Dendritic cell treated with granulocyte-macrophage colony-stimulating factor and Interleukin-4, amounts not matched to agents 40 ng/mL and 50 ng/mL, for 4 days (primary cell): ENCODE measurements at regions of chr2 and their contacts with region 1.

Region 1: DNA sequence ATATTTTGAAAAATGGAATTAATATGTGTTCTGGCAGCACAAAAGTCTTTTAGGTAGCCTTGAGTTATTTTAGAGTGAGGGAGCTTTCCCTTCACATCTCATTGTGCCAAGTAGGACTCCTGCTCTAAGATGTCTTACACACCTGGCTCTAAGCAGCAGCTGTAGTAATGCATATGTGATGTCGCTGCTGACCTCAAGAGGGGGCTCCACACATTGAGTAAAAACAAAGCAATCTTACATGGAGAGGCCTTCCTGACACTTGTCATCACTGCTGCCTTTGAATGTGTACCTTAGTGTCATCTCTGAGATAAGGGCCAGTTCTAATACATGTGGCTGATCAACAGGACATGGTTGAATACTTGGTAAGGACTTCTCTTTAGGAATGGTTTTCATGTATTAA is 75.8 kb downstream of the ACTR3 start:
- H3K4me3 Mint-ChIP-seq: no peak overlapping the region
- H3K27ac Mint-ChIP-seq: no peak overlapping the region
- H3K4me1 Mint-ChIP-seq: peaks cover 46% of the 10 kb centered on the region
- H3K27me3 Mint-ChIP-seq: no peaks in the 10 kb centered on the region

Region 2: DNA sequence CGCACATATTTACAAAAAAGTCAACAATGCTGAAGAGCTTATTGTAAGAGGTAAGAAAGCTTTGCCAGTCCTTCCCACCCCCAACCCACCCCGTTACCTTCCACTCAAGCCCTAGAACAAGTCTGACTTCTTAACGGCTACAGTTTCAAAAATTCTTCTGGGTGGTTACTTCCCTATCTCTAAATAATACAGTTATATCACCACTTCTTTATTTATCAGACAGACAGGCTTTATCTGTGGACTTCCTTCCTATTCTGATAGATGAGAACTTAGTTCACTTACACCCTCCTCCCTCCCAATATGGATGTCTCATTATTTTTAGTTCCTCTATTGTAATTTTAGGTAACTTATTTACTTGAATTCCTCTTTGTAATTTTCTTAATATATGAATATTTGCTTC is 102.5 kb before region 1 on chr2:
- intact Hi-C with region 1: no loop called
- H3K4me3 Mint-ChIP-seq: peak overlapping the region; percentile 62
- H3K27ac Mint-ChIP-seq: peak overlapping the region; percentile 50
- H3K4me1 Mint-ChIP-seq: peaks cover 50% of the 10 kb centered on the region
- H3K27me3 Mint-ChIP-seq: no peaks in the 10 kb centered on the region

Region 3: GRCh38 chr2:114543236-114543766 is 577.7 kb after region 1 on chr2:
- intact Hi-C with region 1: loop called (anchors 10 kb)
- H3K4me3 Mint-ChIP-seq: no peak overlapping the region
- H3K27ac Mint-ChIP-seq: no peak overlapping the region
- H3K4me1 Mint-ChIP-seq: no peaks in the 10 kb centered on the region
- H3K27me3 Mint-ChIP-seq: peaks cover 5% of the 10 kb centered on the region